HepG2 (cell line): ENCODE measurements at regions of chr20 and their contacts with region 1.

Region 1: GRCh38 chr20:51541189-51542032 is 1.1 kb downstream of the NFATC2 start:
- DNase-seq: peak; percentile 87
- ATAC-seq: peak; percentile 82
- H3K4me3 ChIP-seq: peak overlapping the region; percentile 76 to 90 (median 85)
- H3K27ac ChIP-seq: peak overlapping the region; percentile 77
- H3K4me1 ChIP-seq: peaks cover 33% of the 10 kb centered on the region
- H3K27me3 ChIP-seq: peaks cover 0 to 17% of the 10 kb centered on the region in 2 experiments; a peak in 3 of 5 replicates
- CTCF ChIP-seq: no peak; the same call in 1 of the 2 replicates
- EP300 ChIP-seq: peak in 1 of 2 experiments; percentile 77; a peak in 2 of 4 replicates
- POLR2A ChIP-seq: peak; percentile 35 to 71; a peak in 2 of 4 replicates
- RAD21 ChIP-seq: no peak

Region 2: DNA sequence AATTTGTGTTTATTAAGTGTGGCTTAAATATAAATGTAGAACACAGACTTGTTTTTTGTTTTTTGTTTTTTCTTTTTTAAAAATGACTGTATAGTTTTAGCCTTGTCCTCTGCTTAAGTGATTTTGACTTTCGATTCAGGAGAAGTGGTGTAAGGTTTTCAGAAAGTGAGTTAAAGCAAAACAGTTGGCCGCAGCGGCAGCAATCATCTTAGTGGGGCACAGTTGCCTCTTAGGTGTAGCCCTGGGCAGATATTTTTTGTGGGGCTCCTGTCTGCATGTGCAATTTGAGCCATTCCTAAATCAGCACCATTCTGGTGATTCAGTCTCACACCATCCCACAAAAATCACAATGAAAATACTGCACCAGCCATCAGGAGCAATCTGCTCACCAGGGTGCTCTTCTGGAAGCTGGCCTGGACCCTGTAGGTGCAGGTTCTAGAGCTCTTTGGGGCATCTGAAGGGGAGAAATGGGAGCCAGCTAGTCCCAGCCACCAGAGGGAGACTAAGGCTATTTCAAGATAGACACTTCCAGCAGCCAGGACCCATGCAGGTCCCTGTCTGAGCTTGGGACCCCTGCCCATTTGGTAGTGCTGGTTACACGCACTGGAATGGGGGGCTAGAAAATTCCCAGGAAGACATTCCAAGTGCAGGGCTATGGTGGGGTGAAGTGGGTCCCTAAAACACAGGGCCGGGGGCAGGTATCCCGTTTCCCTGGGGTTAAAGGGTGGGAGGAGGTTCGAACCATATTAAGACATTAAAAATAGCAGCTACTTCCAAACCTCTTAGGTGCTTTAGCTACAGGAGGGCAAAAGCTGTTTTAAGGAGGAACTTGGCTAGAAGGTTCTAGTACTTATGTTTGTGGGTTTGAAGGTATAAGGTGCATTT is 155.5 kb before region 1 on chr20:
- CTCF ChIA-PET with region 1: interaction called, 4 read pairs
- POLR2A ChIA-PET with region 1: no interaction called
- in situ Hi-C with region 1: no loop called
- intact Hi-C with region 1: loop called (anchors 2 kb)
- DNase-seq: peak; percentile 53
- ATAC-seq: peak; percentile 80
- H3K4me3 ChIP-seq: no peak overlapping the region
- H3K27ac ChIP-seq: no peak overlapping the region
- H3K4me1 ChIP-seq: no peaks in the 10 kb centered on the region
- H3K27me3 ChIP-seq: no peaks in the 10 kb centered on the region
- CTCF ChIP-seq: peak; percentile 68
- EP300 ChIP-seq: no peak
- POLR2A ChIP-seq: no peak
- RAD21 ChIP-seq: peak; percentile 83

Region 3: GRCh38 chr20:51446663-51447062 is 94.7 kb before region 1 on chr20:
- CTCF ChIA-PET with region 1: no interaction called
- POLR2A ChIA-PET with region 1: no interaction called
- in situ Hi-C with region 1: no loop called
- intact Hi-C with region 1: loop called (anchors 2 kb)
- DNase-seq: peak; percentile 82
- ATAC-seq: peak; percentile 96
- H3K4me3 ChIP-seq: no peak overlapping the region
- H3K27ac ChIP-seq: no peak overlapping the region
- H3K4me1 ChIP-seq: peaks cover 23% of the 10 kb centered on the region
- H3K27me3 ChIP-seq: no peaks in the 10 kb centered on the region
- CTCF ChIP-seq: 0 out of 2 replicates have a peak, but pooled peaks have one; percentile 13
- EP300 ChIP-seq: peak; percentile 44 to 63; a peak in 2 of 4 replicates
- POLR2A ChIP-seq: no peak
- RAD21 ChIP-seq: 0 out of 2 replicates have a peak, but pooled peaks have one; percentile 47

Region 4: GRCh38 chr20:51500311-51500710 is 41.1 kb before region 1 on chr20:
- CTCF ChIA-PET with region 1: no interaction called
- POLR2A ChIA-PET with region 1: no interaction called
- in situ Hi-C with region 1: no loop called
- intact Hi-C with region 1: loop called (anchors 2 kb)
- DNase-seq: no peak
- ATAC-seq: no peak
- H3K4me3 ChIP-seq: no peak overlapping the region
- H3K27ac ChIP-seq: no peak overlapping the region
- H3K4me1 ChIP-seq: no peaks in the 10 kb centered on the region
- H3K27me3 ChIP-seq: no peaks in the 10 kb centered on the region
- CTCF ChIP-seq: no peak
- EP300 ChIP-seq: no peak
- POLR2A ChIP-seq: no peak
- RAD21 ChIP-seq: no peak

Region 5: GRCh38 chr20:51507216-51508036 is 34.0 kb before region 1 on chr20:
- CTCF ChIA-PET with region 1: no interaction called
- POLR2A ChIA-PET with region 1: interaction called, 4 read pairs
- in situ Hi-C with region 1: no loop called
- intact Hi-C with region 1: loop called (anchors 2 kb)
- DNase-seq: no peak
- ATAC-seq: no peak
- H3K4me3 ChIP-seq: no peak overlapping the region
- H3K27ac ChIP-seq: no peak overlapping the region
- H3K4me1 ChIP-seq: peaks cover 36% of the 10 kb centered on the region
- H3K27me3 ChIP-seq: no peaks in the 10 kb centered on the region
- CTCF ChIP-seq: no peak
- EP300 ChIP-seq: no peak
- POLR2A ChIP-seq: no peak
- RAD21 ChIP-seq: no peak

Region 6: GRCh38 chr20:51562332-51563155 is 21.1 kb after region 1 on chr20:
- CTCF ChIA-PET with region 1: interaction called, 3 read pairs
- POLR2A ChIA-PET with region 1: interaction called, 16 read pairs
- in situ Hi-C with region 1: no loop called
- intact Hi-C with region 1: loop called (anchors 1 kb)
- DNase-seq: no peak
- ATAC-seq: peak; percentile 76
- H3K4me3 ChIP-seq: peak overlapping the region; percentile 44 to 75 (median 61)
- H3K27ac ChIP-seq: no peak overlapping the region
- H3K4me1 ChIP-seq: peaks cover 51% of the 10 kb centered on the region
- H3K27me3 ChIP-seq: peaks cover 10 to 55% of the 10 kb centered on the region in 2 experiments; a peak in 4 of 5 replicates
- CTCF ChIP-seq: peak; percentile 69
- EP300 ChIP-seq: no peak
- POLR2A ChIP-seq: no peak
- RAD21 ChIP-seq: peak; percentile 69

Region 7: GRCh38 chr20:51595058-51595532 is 53.7 kb after region 1 on chr20:
- CTCF ChIA-PET with region 1: no interaction called
- POLR2A ChIA-PET with region 1: no interaction called
- in situ Hi-C with region 1: no loop called
- intact Hi-C with region 1: loop called (anchors 1 kb)
- DNase-seq: peak; percentile 88
- ATAC-seq: peak; percentile 98
- H3K4me3 ChIP-seq: no peak overlapping the region
- H3K27ac ChIP-seq: no peak overlapping the region
- H3K4me1 ChIP-seq: peaks cover 13% of the 10 kb centered on the region
- H3K27me3 ChIP-seq: no peaks in the 10 kb centered on the region
- CTCF ChIP-seq: peak; percentile 99
- EP300 ChIP-seq: no peak
- POLR2A ChIP-seq: no peak
- RAD21 ChIP-seq: peak; percentile 98